ENCODE measurements at regions of chr6 and their contacts with region 1.

Region 1: DNA sequence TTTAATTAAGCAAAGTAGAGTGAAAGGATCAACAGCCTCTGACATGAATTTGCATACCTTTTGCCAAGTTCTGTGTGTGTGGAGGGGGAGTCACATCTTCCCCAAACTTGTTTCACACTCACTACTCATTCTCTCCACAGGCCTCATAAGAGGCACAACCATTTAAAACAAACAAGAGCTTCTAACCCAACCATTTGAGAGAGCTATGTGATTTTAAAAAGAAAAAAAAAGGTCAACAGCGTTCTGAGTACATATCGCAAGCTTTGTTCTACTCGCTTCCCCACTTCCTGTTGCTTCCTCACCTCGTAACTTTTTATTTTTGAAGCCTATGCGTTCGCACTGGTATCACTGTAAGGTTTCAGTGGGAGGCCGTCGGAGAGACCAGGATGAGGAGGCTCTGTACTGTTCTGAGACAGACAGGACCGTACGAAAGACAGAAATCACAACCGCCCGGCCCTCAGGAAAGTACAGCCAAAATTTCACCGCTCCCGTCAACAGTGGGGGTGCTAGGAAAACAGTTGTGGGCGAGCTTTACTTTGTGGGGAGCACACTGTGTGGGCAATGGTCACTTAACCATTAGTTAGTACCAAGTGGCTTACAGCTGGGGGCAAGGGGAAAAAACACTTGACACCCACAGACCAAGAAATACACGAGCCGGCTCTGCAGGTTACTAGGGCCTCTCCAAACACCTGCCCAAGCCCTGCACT is 61.3 kb downstream of the TRERF1 start:
- DNase-seq: peak; percentile 83
- ATAC-seq: peak; percentile 78
- H3K4me3 Mint-ChIP-seq: peak overlapping the region; percentile 67
- H3K27ac Mint-ChIP-seq: peak overlapping the region; percentile 99
- H3K4me1 Mint-ChIP-seq: peaks cover 96% of the 10 kb centered on the region
- H3K27me3 Mint-ChIP-seq: no peaks in the 10 kb centered on the region

Region 2: GRCh38 chr6:42378125-42378524 is 12.3 kb before region 1 on chr6:
- CTCF ChIA-PET with region 1: interaction called, 28 read pairs
- DNase-seq: peak; percentile 67
- ATAC-seq: peak; percentile 82
- H3K4me3 Mint-ChIP-seq: peak overlapping the region; percentile 47
- H3K27ac Mint-ChIP-seq: peak overlapping the region; percentile 93
- H3K4me1 Mint-ChIP-seq: peaks cover 81% of the 10 kb centered on the region
- H3K27me3 Mint-ChIP-seq: no peaks in the 10 kb centered on the region

Region 3: DNA sequence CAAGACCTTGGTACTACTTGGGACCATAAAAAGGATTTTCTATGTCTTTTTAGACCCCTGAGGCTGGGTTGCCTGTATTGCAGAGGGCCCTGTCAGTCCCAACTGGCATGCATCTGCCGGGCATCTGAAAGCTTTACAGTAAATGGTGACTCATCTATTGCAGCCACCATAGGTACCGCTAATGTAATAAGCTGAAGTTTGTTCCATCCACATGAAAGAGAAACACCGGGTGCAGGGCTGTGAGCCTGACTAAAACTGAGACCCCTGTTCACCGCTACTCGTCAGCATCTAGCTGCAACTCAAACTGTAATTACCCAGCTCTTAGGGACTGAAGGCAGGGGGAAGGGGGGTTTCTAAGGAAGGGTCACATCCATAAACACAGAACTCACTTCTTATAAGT is 11.8 kb after region 1 on chr6:
- CTCF ChIA-PET with region 1: interaction called, 57 read pairs
- DNase-seq: peak; percentile 88
- ATAC-seq: peak; percentile 86
- H3K4me3 Mint-ChIP-seq: peak overlapping the region; percentile 61
- H3K27ac Mint-ChIP-seq: peak overlapping the region; percentile 80
- H3K4me1 Mint-ChIP-seq: peaks cover 80% of the 10 kb centered on the region
- H3K27me3 Mint-ChIP-seq: no peaks in the 10 kb centered on the region

Measured in activated CD8-positive, alpha-beta memory T cell treated with anti-CD3 and anti-CD28 coated beads, Interleukin-2, amount 10 ng/mL, durations not matched to agents 7 days and 5 days (primary cell).